A549 (cell line): ENCODE measurements at regions of chr11 and their contacts with region 1.

Region 1: DNA sequence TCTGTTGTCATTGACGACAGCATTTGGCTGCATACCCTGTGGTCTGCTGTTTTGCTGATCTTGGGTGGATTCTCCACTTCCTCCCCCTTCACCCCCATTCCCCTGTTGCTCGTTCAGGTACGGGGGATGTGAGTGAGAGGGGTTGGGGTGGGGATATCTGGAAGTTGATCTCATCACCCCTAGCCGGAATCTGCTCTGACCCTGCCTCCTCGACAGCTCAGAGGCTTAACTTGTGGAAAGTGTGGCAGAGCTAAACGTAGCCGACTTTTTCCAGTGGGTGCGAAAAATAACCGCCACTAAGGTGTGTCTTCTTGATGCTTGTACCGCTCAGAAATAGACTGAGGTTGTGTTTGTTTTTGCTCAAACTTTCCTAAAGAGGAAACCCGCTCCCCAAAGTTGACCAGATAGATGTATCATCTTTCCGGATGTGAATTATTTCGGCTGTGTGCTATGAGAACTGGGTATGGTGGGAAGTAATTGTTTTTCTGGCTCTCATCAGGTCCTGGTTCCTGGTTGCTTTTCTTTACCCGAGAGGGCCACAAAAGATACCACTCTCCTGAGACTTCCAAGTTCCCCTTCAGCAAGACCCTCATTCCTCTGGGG is 6.6 kb downstream of the ZBTB16 start:
- DNase-seq: no peak
- ATAC-seq: no peak
- H3K4me3 ChIP-seq: no peak overlapping the region
- H3K27ac ChIP-seq: no peak overlapping the region
- H3K4me1 ChIP-seq: no peaks in the 10 kb centered on the region
- CTCF ChIP-seq: no peak
- EP300 ChIP-seq: no peak
- POLR2A ChIP-seq: no peak
- RAD21 ChIP-seq: no peak

Region 2: GRCh38 chr11:113971506-113972195 is 94.5 kb before region 1 on chr11:
- CTCF ChIA-PET with region 1: no interaction called
- POLR2A ChIA-PET with region 1: interaction called, 10 read pairs
- DNase-seq: no peak
- ATAC-seq: no peak
- H3K4me3 ChIP-seq: no peak overlapping the region
- H3K27ac ChIP-seq: no peak overlapping the region
- H3K4me1 ChIP-seq: no peaks in the 10 kb centered on the region
- CTCF ChIP-seq: no peak
- EP300 ChIP-seq: no peak
- POLR2A ChIP-seq: no peak
- RAD21 ChIP-seq: no peak

Region 3: DNA sequence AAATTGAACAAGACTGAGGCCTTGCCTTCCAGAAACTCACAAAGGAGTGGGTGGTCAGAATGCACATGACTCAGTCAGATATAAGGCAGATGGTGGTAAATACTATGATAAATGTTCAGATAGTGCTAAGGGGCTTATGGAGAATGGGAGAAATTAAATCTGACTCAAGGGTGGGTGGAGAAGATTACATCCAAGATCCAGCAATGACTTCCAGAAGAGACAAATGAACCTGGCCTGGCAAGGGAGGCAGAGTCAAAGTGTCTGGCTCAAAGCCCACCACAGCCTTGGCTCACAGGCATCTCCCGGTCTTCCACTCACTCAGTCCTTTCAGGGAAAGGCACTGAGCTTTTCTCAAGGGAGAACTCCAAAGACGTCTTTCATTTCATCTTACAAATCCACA is 12.7 kb before region 1 on chr11:
- CTCF ChIA-PET with region 1: no interaction called
- POLR2A ChIA-PET with region 1: no interaction called
- DNase-seq: no peak
- ATAC-seq: no peak
- H3K4me3 ChIP-seq: no peak overlapping the region
- H3K27ac ChIP-seq: no peak overlapping the region
- H3K4me1 ChIP-seq: no peaks in the 10 kb centered on the region
- CTCF ChIP-seq: no peak
- EP300 ChIP-seq: no peak
- POLR2A ChIP-seq: no peak
- RAD21 ChIP-seq: no peak

Region 4: DNA sequence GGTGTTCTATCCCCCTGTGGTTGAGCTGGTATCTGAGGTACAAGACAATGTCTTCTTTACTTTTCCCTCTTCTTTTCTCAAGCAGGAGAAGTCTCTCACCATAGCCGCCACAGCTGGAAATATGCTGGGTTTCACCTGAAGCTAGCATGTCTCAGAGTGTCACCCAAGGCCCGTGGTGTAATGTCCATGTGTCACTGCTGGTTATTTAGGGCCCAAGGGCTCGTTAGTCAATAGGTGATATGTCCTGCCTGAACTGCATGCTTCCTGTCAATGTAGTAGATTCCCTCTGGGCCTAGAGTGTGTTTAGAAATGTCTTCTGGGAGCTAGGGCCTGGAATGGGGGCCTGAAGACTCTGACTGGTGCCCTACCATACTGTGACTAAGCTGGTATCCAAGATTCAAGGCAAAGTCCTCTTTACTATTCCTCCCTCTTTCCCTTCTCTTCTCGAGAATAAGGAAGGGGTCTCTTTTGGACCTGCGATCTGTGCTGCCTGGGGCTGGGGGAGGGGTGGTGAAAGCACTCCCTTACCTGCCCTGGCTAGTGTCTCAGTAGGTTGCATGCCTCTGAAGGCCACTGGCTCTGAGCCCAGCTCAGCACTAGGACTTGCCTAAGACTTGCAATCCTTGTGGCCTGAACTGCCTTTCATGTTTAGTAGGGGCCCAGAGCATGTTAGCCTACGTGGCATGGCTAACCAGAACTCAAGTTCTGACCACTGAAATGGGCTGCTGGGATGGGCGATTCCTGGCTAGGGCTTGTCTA is 360.0 kb after region 1 on chr11:
- CTCF ChIA-PET with region 1: no interaction called
- POLR2A ChIA-PET with region 1: no interaction called
- DNase-seq: no peak
- ATAC-seq: no peak
- H3K4me3 ChIP-seq: no peak overlapping the region
- H3K27ac ChIP-seq: no peak overlapping the region
- H3K4me1 ChIP-seq: no peaks in the 10 kb centered on the region
- CTCF ChIP-seq: no peak
- EP300 ChIP-seq: no peak
- POLR2A ChIP-seq: no peak
- RAD21 ChIP-seq: no peak